Adrenal gland (tissue), 19 donors: ENCODE measurements at regions of chr7 and their contacts with region 1.

Region 1: DNA sequence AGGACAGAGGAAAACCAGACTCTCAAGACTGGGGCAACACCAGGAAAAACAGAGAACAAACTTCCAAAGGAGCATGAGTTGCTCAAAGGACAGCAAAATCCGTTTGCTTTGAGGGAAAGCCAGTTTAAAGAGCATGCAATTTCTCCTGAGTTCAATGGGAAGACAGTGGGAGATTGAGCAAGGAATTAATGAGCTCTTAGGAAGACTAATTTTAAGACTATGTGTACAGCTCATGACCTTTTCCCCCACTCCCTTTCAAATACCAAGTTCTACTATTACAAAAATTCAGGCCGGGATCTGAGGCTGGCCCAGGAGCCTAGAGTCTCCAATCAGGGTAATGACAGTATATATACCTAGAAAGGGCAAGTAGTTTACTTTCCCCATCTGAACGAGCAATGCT is 79.2 kb downstream of the EPDR1 start:
- DNase-seq: no peak
- H3K4me3 ChIP-seq: peak overlapping the region in 1 of 4 donors; percentile 3
- H3K27ac ChIP-seq: peak overlapping the region in 4 of 5 donors; percentile 14 to 78 (median 48)
- H3K4me1 ChIP-seq: peaks cover 13 to 18% of the 10 kb centered on the region in 2 donors
- H3K27me3 ChIP-seq: no peaks in the 10 kb centered on the region
- CTCF ChIP-seq: no peak
- POLR2A ChIP-seq: no peak

Region 2: GRCh38 chr7:37916673-37917660 is 82.7 kb before region 1 on chr7 and contains the start of gene SFRP4:
- intact Hi-C with region 1: loop called in 1 of 2 experiments (anchors 10 kb)
- DNase-seq: peak; percentile 58 to 79 (median 72)
- H3K4me3 ChIP-seq: peak within 1 kb of the TSS in 3 of 4 donors; percentile 6 to 54 (median 52)
- H3K27ac ChIP-seq: peak within 1 kb of the TSS in 3 of 5 donors; percentile 51 to 73 (median 67)
- H3K4me1 ChIP-seq: peaks cover 23 to 33% of the 10 kb centered on the region in 2 donors
- H3K27me3 ChIP-seq: no peaks in the 10 kb centered on the region
- CTCF ChIP-seq: peak; percentile 60 to 85 (median 77)
- POLR2A ChIP-seq: no peak
- total RNA-seq, gene SFRP4: 1.1 to 16.3 (median 8.0) TPM